ENCODE measurements at regions of chr3 and their contacts with region 1.

Region 1: DNA sequence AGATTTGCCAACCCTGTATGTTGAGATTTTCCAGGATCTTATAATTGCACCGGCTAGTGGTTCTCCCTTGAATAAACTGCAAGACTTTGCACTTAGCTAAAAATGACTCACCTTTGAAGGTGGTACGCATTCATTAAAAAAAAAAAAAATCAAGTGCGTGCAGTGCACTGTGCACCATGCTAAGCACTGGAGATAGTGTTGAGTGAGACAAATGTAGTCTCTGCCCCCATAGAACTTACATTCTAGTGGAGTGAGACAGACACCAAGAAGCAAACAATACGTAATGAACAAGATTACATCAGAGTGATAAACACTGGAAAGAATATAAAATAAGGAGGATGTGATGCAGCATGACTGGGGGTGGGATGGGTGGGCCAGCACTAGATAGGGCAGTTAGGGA is 69.4 kb downstream of the ITPR1 start:
- DNase-seq: no peak
- H3K4me3 ChIP-seq: no peak overlapping the region
- H3K27ac ChIP-seq: no peak overlapping the region
- H3K4me1 ChIP-seq: no peaks in the 10 kb centered on the region
- CTCF ChIP-seq: no peak

Region 2: GRCh38 chr3:4279516-4280105 is 283.0 kb before region 1 on chr3:
- CTCF ChIA-PET with region 1: no interaction called
- POLR2A ChIA-PET with region 1: no interaction called
- intact Hi-C with region 1: no loop called
- DNase-seq: no peak
- H3K4me3 ChIP-seq: no peak overlapping the region
- H3K27ac ChIP-seq: no peak overlapping the region
- H3K4me1 ChIP-seq: no peaks in the 10 kb centered on the region
- CTCF ChIP-seq: no peak

Region 3: DNA sequence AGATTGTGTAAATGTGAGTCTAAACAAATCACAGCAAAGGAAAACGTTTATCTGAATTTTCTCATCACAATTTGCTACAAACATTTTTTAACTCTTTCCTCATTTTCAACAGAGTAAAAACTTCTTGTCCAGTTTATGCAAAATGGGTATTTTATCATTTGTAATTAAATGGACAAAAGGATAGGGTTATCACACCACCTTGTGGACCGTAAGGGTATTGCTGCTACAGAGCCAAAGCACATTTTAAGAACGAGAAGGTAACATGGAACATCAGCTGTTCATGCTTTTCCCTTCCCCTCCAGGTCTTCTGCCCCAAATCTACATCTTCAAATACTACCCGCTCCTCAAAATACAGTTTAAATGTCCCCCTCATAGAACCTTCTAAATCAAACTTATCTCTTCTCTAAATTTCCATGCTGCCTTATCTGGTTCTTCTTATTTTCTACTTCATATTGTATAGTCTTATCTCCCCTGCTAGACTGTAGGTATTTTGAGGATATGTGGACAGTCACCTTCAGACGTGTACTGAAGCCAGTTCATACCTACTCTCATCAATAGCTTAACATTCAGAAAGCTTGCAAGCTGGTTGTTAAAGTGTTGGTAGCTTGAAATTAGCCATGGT is 272.2 kb before region 1 on chr3:
- CTCF ChIA-PET with region 1: no interaction called
- POLR2A ChIA-PET with region 1: no interaction called
- intact Hi-C with region 1: no loop called
- DNase-seq: peak; percentile 43
- H3K4me3 ChIP-seq: no peak overlapping the region
- H3K27ac ChIP-seq: no peak overlapping the region
- H3K4me1 ChIP-seq: no peaks in the 10 kb centered on the region
- CTCF ChIP-seq: peak; percentile 93

Region 4: DNA sequence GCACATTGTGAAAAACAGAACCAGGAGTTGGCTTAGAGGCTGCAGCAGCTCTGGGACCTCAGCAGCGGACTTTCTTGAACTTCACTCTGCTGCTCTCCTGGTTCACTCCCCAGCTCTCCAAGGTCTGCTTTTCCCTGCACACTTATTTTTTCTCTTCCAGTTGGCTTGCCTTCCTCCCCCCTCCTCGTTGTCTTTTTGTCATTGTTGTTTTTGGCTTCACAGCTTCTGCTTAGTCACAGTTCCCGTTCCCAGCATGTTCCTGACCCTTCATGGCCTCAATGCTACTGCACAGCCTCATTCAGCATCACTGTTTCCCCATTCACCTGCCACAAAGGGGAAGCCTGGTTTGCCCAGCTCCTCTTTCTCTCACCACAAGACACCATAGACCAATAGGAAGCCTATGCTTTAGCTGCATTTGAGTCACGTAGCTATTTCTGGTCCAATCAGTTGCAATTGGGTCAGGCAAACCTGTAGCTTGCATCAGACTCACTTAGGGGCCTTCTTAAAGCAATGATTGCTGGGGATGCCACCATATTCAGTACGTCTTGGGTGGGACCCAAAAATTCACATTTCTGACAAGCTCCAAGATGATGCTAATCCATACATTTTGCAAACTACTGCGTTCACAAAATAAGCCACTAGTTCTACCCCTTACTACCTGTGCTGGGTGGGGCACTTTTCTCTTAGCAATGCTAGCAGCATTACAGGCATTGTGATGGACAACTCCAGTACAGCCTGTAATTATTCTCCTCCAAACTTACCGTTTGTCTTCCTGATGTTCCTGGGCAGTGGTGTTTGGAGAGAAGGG is 87.7 kb before region 1 on chr3:
- CTCF ChIA-PET with region 1: no interaction called
- POLR2A ChIA-PET with region 1: no interaction called
- intact Hi-C with region 1: no loop called
- DNase-seq: no peak
- H3K4me3 ChIP-seq: no peak overlapping the region
- H3K27ac ChIP-seq: no peak overlapping the region
- H3K4me1 ChIP-seq: no peaks in the 10 kb centered on the region
- CTCF ChIP-seq: no peak

Region 5: DNA sequence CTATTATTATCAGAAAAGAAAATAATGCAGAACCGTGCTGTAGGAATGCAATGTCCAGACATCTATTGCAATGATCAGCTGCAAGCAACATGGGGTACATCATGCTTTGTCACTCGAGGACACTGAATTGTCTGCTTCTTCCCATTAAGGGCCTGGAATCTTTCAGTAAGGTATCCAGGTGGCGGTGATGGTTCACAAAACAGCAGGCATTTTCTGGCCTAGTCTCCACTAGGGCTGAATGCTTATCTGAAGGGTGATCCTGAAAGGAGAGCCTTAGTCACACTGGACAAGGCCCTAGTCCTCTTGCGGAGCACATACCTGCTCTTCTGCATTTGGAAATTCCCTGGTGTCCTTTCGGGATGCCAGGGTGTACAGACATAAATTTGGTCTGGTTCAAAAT is 48.3 kb before region 1 on chr3:
- CTCF ChIA-PET with region 1: no interaction called
- POLR2A ChIA-PET with region 1: no interaction called
- intact Hi-C with region 1: no loop called
- DNase-seq: no peak
- H3K4me3 ChIP-seq: no peak overlapping the region
- H3K27ac ChIP-seq: no peak overlapping the region
- H3K4me1 ChIP-seq: peaks cover 17% of the 10 kb centered on the region
- CTCF ChIP-seq: no peak

Region 6: DNA sequence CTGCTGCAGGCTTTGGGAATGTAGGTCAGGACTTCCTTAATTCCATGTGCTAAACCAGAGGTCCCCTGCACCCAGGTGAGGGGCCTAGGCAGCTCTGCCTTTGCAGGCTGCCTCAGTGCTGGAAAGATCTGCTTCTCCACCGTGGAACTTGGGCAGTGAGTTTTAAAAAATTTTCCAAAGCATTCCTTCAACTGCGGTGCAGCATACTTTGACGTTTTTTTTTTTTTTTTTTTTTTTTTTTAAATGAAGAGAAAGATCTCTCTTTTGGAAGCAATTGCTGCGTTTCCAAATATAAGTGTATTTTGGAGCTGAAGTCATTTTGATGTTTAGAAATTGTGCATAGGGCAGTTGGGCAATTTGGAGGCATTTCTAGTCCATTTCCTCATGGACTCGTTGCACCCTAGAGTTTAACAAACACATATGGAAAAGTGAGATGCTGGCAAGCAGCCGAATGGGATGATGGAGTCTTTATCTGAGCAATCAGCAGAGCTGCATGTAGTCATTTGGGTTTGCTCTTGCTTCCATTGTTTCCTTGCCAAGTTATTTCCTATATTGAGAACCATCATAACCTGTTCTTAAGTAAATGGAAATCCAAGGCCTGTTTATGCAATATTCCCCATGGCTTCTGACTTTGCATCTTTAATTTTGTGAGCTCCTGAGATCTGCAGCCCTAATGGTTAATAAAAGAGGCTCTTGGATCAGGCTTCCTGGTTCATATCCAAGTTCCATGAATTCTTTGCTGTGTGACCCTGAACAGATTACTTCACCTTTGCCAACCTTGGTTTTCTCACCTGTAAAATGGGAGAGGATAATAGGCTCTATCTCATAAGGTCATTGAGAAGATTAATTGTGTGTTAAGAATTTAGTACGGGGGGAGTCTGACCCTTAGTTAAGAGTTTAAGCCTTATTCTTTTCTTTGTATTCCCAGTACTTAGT is 38.2 kb before region 1 on chr3:
- CTCF ChIA-PET with region 1: no interaction called
- POLR2A ChIA-PET with region 1: interaction called, 10 read pairs
- intact Hi-C with region 1: no loop called
- DNase-seq: no peak
- H3K4me3 ChIP-seq: no peak overlapping the region
- H3K27ac ChIP-seq: no peak overlapping the region
- H3K4me1 ChIP-seq: peaks cover 12% of the 10 kb centered on the region
- CTCF ChIP-seq: no peak